Posterior vena cava (tissue), 2 donors: ENCODE measurements at regions of chr2 and their contacts with region 1.

Region 1: GRCh38 chr2:197571627-197572271 is 55.9 kb downstream of the MOB4 start:
- DNase-seq: no peak

Region 2: DNA sequence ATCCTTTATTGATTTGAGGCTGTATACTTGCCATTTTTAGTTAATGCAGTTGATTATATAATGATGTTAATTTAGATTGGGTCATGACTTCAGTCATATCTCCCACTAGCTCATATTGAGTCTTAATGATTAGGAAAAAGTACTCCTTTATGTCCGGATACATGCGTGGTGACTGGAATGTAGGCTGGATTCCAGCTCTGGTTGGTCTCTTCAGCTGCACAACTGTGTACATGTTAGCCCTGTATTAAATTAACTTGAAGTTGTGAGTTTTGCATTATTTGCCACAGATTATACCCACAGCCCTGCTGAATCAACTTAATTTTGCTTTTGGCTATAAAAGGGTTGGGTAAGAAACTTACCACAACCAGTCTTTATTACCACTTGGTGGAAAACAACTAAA is 33.3 kb before region 1 on chr2:
- intact Hi-C with region 1: loop called in 1 of 2 experiments (anchors 2 kb)
- DNase-seq: no peak

Region 3: GRCh38 chr2:197606180-197606579 is 34.4 kb after region 1 on chr2:
- intact Hi-C with region 1: no loop called
- DNase-seq: no peak

Region 4: DNA sequence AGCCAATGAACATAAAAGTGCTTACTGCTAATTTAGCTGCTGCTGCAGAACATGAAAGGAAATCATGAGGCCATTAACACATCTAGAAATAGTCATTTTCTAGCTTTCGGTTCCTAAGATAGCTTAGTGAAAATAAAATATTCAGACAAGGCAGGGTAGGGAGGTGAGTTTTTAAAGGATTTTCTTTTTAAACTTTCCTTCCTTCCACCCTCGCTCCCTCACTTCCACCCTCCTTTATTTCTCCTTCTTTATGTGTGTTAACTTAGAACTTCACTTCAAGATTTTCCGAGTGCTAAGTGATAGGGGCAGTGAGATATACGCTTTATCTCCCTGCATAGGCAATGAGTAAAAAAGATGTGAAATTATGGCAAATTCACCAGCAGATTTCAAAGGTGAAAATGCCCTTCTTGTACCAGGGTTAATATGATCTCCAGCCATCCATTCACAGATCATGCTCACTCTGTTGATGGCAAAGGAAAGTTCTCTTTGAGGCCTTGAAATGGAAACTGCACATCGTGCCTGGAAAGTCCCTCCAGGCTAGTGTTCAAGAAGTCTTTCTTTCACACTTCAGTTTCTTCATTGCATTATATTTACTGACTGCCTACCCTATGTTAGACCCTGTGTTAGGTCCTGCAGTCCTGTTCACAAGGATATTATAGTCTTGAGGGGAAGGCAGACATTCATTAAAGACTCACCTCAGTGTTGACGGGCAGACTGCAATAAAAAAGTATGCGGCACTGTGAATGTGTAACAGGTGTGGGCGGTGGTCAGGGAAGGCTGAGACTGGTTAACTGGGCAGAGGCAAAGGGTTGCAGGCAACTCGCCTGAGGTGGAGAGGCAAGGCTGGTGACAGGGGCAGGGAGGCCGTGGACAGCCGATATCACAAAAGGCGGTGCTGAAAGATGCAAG is 433.4 kb after region 1 on chr2:
- intact Hi-C with region 1: no loop called
- DNase-seq: no peak